WTC11 (cell line): ENCODE measurements at regions of chr20 and their contacts with region 1.

Region 1: GRCh38 chr20:21767739-21768223 is 62.3 kb downstream of the PAX1 start:
- DNase-seq: peak; percentile 89
- ATAC-seq: peak; percentile 97
- H3K4me3 Mint-ChIP-seq: peak overlapping the region; percentile 48
- H3K27ac Mint-ChIP-seq: no peak overlapping the region
- H3K4me1 Mint-ChIP-seq: peaks cover 4% of the 10 kb centered on the region
- H3K27me3 Mint-ChIP-seq: peaks cover 18% of the 10 kb centered on the region
- CTCF ChIP-seq: peak; percentile 59; the same call in 1 of the 2 replicates

Region 2: DNA sequence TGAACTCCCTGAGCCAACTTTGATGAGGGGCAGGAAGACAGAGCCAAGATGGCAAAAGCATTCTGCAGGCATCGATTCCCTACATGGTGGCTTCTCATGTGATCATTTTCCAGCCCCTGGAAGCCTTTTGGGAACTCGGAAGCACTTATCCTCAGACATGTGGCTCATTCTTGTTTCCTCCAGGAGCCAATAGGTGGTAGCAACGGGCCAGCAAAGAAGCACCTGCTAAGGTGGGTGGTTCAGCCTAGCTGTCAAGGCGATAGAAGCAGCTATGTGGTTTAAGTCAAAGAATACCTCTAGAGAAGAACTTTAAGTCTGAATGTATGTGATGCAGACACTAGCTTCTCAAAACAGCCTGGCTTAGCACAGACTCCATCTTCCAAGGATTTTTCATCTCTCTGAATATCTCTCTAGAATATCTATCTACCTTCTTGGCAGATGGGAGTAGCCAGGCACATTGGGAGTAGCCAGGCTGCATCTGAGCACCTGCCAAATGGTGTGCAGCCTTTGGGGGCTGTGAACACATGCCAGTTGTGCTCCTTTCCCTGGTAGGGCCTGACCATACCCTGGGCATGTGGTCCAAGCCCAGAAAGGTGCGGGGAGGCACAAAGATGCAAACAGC is 127.1 kb before region 1 on chr20:
- CTCF ChIA-PET with region 1: interaction called, 15 read pairs
- POLR2A ChIA-PET with region 1: no interaction called
- DNase-seq: peak; percentile 68
- ATAC-seq: peak; percentile 99
- H3K4me3 Mint-ChIP-seq: no peak overlapping the region
- H3K27ac Mint-ChIP-seq: no peak overlapping the region
- H3K4me1 Mint-ChIP-seq: no peaks in the 10 kb centered on the region
- H3K27me3 Mint-ChIP-seq: peaks cover 3% of the 10 kb centered on the region; the same call in 1 of the 2 replicates
- CTCF ChIP-seq: peak; percentile 30; the same call in 1 of the 2 replicates

Region 3: GRCh38 chr20:21702553-21703470 is 65.0 kb before region 1 on chr20:
- CTCF ChIA-PET with region 1: interaction called, 34 read pairs
- POLR2A ChIA-PET with region 1: no interaction called
- DNase-seq: peak; percentile 95
- ATAC-seq: peak; percentile 71
- H3K4me3 Mint-ChIP-seq: peak overlapping the region; percentile 57
- H3K27ac Mint-ChIP-seq: no peak overlapping the region
- H3K4me1 Mint-ChIP-seq: peaks cover 70% of the 10 kb centered on the region
- H3K27me3 Mint-ChIP-seq: peaks cover 98% of the 10 kb centered on the region
- CTCF ChIP-seq: peak; percentile 68; the same call in 1 of the 2 replicates

Region 4: DNA sequence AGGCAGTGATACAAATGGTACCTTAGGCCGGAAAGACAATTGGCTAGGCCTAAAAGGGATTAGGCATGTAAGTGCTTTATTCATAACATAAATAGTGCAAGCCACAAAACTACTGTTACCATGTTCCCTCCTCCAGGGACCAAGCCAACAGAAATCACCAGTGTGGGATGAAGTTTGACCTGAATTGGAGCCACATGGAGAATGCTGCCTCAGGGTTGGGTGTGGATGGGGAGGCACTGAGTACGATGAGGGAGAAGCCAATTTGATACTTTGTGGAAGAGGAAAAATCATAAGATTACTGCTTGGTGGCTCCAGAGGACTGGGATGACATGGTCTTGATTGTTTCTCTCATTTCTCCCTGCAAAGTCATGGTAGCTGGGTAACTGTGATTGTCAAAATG is 11.8 kb before region 1 on chr20:
- CTCF ChIA-PET with region 1: interaction called, 22 read pairs
- POLR2A ChIA-PET with region 1: no interaction called
- DNase-seq: no peak
- ATAC-seq: no peak
- H3K4me3 Mint-ChIP-seq: no peak overlapping the region
- H3K27ac Mint-ChIP-seq: no peak overlapping the region
- H3K4me1 Mint-ChIP-seq: no peaks in the 10 kb centered on the region
- H3K27me3 Mint-ChIP-seq: no peaks in the 10 kb centered on the region
- CTCF ChIP-seq: no peak

Region 5: DNA sequence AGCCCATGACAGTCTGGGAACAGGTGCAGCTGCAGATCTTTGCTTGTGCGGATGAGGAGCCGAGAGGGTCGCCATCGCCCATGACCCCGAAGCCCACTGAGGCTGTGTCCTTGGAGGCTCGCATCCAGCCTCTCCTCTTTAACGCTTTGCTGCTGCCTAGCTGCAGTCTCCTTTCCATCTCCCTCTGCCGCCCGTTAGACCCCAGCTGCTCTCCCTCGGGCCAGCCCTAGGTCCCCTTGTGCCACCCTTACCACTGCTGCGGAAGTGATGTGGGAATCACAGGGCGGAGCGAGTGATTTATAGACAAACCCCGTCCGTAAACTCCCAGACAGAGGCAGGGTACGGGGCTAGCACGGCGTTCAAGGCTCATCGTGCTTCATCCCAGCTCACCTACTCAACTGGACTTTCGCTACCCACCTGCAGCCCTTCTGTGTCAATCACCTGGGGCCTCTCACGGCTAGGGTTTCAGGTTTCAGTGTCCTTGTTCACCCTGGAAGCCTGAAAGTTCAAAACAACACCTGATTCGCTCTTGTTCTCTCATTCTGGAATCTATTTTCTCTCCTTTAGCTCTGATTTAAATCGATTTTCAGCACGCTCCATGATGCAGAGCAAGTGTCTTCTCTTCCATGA is 13.8 kb after region 1 on chr20:
- CTCF ChIA-PET with region 1: interaction called, 14 read pairs
- POLR2A ChIA-PET with region 1: no interaction called
- DNase-seq: peak; percentile 27
- ATAC-seq: peak; percentile 64
- H3K4me3 Mint-ChIP-seq: no peak overlapping the region
- H3K27ac Mint-ChIP-seq: no peak overlapping the region
- H3K4me1 Mint-ChIP-seq: peaks cover 13% of the 10 kb centered on the region
- H3K27me3 Mint-ChIP-seq: peaks cover 3% of the 10 kb centered on the region; the same call in 1 of the 2 replicates
- CTCF ChIP-seq: no peak

Region 6: DNA sequence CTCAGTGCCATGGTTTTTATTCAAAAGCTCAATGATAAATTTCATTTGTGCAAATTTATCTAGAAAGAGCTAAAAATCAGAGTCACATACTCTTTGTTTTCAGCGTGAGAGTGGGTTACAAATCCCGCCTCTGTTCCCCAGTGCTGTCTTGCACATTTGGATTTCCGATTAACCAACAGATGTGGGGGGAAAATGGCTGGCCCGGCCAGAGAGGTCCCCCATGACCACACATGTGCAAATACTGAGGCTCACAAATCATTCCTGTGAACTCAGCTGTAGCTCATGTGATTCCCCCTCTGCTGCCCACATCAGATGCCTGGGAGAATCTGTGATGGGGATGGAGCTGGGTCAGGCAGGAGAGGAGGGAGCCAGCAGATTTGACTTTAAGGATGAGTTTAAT is 106.3 kb after region 1 on chr20:
- CTCF ChIA-PET with region 1: no interaction called
- POLR2A ChIA-PET with region 1: no interaction called
- DNase-seq: no peak
- ATAC-seq: no peak
- H3K4me3 Mint-ChIP-seq: no peak overlapping the region
- H3K27ac Mint-ChIP-seq: no peak overlapping the region
- H3K4me1 Mint-ChIP-seq: 0 out of 2 replicates have a peak, but pooled peaks cover 3% of the 10 kb centered on the region
- H3K27me3 Mint-ChIP-seq: peaks cover 62% of the 10 kb centered on the region
- CTCF ChIP-seq: no peak

Region 7: GRCh38 chr20:22106308-22106938 is 338.6 kb after region 1 on chr20:
- CTCF ChIA-PET with region 1: interaction called, 12 read pairs
- POLR2A ChIA-PET with region 1: no interaction called
- DNase-seq: no peak
- ATAC-seq: peak; percentile 71
- H3K4me3 Mint-ChIP-seq: no peak overlapping the region
- H3K27ac Mint-ChIP-seq: no peak overlapping the region
- H3K4me1 Mint-ChIP-seq: no peaks in the 10 kb centered on the region
- H3K27me3 Mint-ChIP-seq: no peaks in the 10 kb centered on the region; the same call in 1 of the 2 replicates
- CTCF ChIP-seq: no peak